ENCODE measurements at regions of chr13 and their contacts with region 1.

Region 1: GRCh38 chr13:80342471-80343380 is 1.8 kb upstream of the SPRY2 start:
- DNase-seq: peak in 1 of 2 experiments; percentile 96
- H3K4me3 ChIP-seq: peak overlapping the region; percentile 42 to 100 (median 65); a peak in 7 of 8 replicates
- H3K27ac ChIP-seq: peak overlapping the region; percentile 37; the same call in 1 of the 2 replicates
- H3K4me1 ChIP-seq: peaks cover 0 to 8% (median 4%) of the 10 kb centered on the region in 4 experiments; a peak in 4 of 7 replicates
- H3K27me3 ChIP-seq: peaks cover 0 to 2% (median 0%) of the 10 kb centered on the region in 4 experiments; a peak in 1 of 7 replicates
- CTCF ChIP-seq: peak; percentile 85 to 93 (median 93)
- EP300 ChIP-seq: no peak
- POLR2A ChIP-seq: peak in 1 of 2 experiments; percentile 68; a peak in 2 of 3 replicates
- RAD21 ChIP-seq: peak; percentile 77 to 82

Region 2: GRCh38 chr13:79679334-79679733 is 663.4 kb before region 1 on chr13:
- CTCF ChIA-PET with region 1: interaction called, 12 read pairs
- POLR2A ChIA-PET with region 1: no interaction called
- DNase-seq: peak; percentile 21 to 77
- H3K4me3 ChIP-seq: no peak overlapping the region
- H3K27ac ChIP-seq: no peak overlapping the region
- H3K4me1 ChIP-seq: no peaks in the 10 kb centered on the region
- H3K27me3 ChIP-seq: no peaks in the 10 kb centered on the region
- CTCF ChIP-seq: peak; percentile 58 to 89 (median 65)
- EP300 ChIP-seq: no peak
- POLR2A ChIP-seq: no peak
- RAD21 ChIP-seq: peak; percentile 93 to 94

Region 3: GRCh38 chr13:80297094-80297493 is 45.6 kb before region 1 on chr13:
- CTCF ChIA-PET with region 1: interaction called, 7 read pairs
- POLR2A ChIA-PET with region 1: interaction called, 13 read pairs
- DNase-seq: peak; percentile 49
- H3K4me3 ChIP-seq: peak overlapping the region in 1 of 4 experiments; percentile 34; a peak in 1 of 8 replicates
- H3K27ac ChIP-seq: no peak overlapping the region
- H3K4me1 ChIP-seq: peaks cover 1 to 6% (median 5%) of the 10 kb centered on the region in 4 experiments; a peak in 4 of 7 replicates
- H3K27me3 ChIP-seq: no peaks in the 10 kb centered on the region
- CTCF ChIP-seq: no peak
- EP300 ChIP-seq: no peak
- POLR2A ChIP-seq: no peak
- RAD21 ChIP-seq: no peak

Region 4: GRCh38 chr13:80329250-80329649 is 13.5 kb before region 1 on chr13:
- CTCF ChIA-PET with region 1: no interaction called
- POLR2A ChIA-PET with region 1: interaction called, 10 read pairs
- DNase-seq: no peak
- H3K4me3 ChIP-seq: no peak overlapping the region
- H3K27ac ChIP-seq: no peak overlapping the region
- H3K4me1 ChIP-seq: no peaks in the 10 kb centered on the region
- H3K27me3 ChIP-seq: no peaks in the 10 kb centered on the region
- CTCF ChIP-seq: no peak
- EP300 ChIP-seq: no peak
- POLR2A ChIP-seq: no peak
- RAD21 ChIP-seq: no peak

Region 5: DNA sequence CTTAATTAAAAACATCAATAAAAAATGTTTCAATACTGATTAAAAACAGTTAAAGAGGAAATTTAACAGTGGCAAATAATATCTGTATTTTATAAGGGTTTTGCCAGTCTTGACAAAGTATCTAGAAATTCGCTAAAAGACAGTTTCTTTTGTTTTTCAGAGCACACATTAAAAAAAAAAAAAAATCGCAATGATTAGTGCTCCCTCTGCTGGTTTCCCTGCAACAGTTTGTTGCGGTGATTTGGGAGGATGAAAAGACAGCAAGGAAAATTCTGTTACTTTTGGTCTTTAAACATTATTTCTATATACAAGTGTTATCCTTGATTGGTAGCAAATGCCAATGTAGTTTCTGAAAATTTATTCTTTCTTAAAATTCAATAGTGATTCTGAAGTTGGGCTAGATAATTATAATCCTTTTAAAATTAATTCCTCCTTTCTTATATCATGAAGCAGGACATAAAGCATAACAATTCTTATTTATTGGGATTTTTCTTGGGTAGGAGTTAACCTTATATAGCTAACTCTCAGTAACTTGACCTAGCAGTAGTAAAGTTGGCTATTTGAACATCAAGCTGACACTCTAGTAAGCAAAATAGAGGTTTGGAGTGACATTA is 21.3 kb after region 1 on chr13:
- CTCF ChIA-PET with region 1: interaction called, 61 read pairs
- POLR2A ChIA-PET with region 1: interaction called, 34 read pairs
- DNase-seq: no peak
- H3K4me3 ChIP-seq: no peak overlapping the region
- H3K27ac ChIP-seq: no peak overlapping the region
- H3K4me1 ChIP-seq: peaks cover 0 to 9% (median 5%) of the 10 kb centered on the region in 4 experiments; a peak in 5 of 7 replicates
- H3K27me3 ChIP-seq: no peaks in the 10 kb centered on the region; a peak in 1 of 7 replicates
- CTCF ChIP-seq: peak in 2 of 3 experiments; percentile 53 to 58; a peak in 2 of 4 replicates
- EP300 ChIP-seq: no peak
- POLR2A ChIP-seq: no peak
- RAD21 ChIP-seq: peak; percentile 70 to 77

Region 6: GRCh38 chr13:80654638-80655249 is 312.0 kb after region 1 on chr13:
- CTCF ChIA-PET with region 1: no interaction called
- POLR2A ChIA-PET with region 1: no interaction called
- DNase-seq: no peak
- H3K4me3 ChIP-seq: no peak overlapping the region
- H3K27ac ChIP-seq: no peak overlapping the region
- H3K4me1 ChIP-seq: no peaks in the 10 kb centered on the region
- H3K27me3 ChIP-seq: no peaks in the 10 kb centered on the region
- CTCF ChIP-seq: no peak
- EP300 ChIP-seq: no peak
- POLR2A ChIP-seq: no peak
- RAD21 ChIP-seq: no peak